AG04450 (cell line): ENCODE measurements at regions of chr6 and their contacts with region 1.

Region 1: GRCh38 chr6:33744001-33744848 is 2.5 kb downstream of the IP6K3 start:
- DNase-seq: no peak
- H3K4me3 ChIP-seq: no peak overlapping the region
- H3K27ac ChIP-seq: no peak overlapping the region
- H3K27me3 ChIP-seq: peaks cover 22% of the 10 kb centered on the region
- CTCF ChIP-seq: peak; percentile 96

Region 2: GRCh38 chr6:32271429-32271828 is 1472.8 kb before region 1 on chr6:
- CTCF ChIA-PET with region 1: no interaction called
- POLR2A ChIA-PET with region 1: no interaction called
- DNase-seq: no peak
- H3K4me3 ChIP-seq: no peak overlapping the region
- H3K27ac ChIP-seq: no peak overlapping the region
- H3K27me3 ChIP-seq: no peaks in the 10 kb centered on the region
- CTCF ChIP-seq: no peak

Region 3: DNA sequence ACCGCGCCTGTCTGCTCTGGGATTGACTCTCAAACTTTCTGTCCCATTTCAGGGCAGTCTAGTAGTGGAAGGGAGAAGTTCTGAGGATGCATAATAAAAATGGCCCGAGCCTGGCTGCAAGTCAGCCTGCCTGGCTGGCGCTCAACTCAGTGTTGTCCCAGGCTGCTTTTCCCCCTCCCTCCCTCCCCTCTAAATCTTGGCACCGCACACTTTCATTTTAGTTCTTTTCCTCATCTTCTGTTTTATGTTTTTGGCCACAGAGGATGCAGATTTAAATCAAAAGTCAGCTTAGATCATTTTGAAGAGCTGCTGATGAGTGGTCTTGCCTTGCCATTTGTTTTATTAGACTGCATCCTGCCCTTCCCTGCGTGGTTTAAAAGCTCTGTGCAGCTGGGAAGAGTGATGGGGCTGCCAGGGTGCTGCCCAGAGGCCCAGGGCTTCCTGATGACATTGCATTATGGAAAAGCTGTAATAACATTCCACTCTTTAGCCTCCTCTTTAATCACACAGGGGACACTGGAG is 26.2 kb before region 1 on chr6:
- CTCF ChIA-PET with region 1: interaction called, 11 read pairs
- POLR2A ChIA-PET with region 1: no interaction called
- DNase-seq: no peak
- H3K4me3 ChIP-seq: no peak overlapping the region
- H3K27ac ChIP-seq: no peak overlapping the region
- H3K27me3 ChIP-seq: peaks cover 31% of the 10 kb centered on the region
- CTCF ChIP-seq: no peak

Region 4: DNA sequence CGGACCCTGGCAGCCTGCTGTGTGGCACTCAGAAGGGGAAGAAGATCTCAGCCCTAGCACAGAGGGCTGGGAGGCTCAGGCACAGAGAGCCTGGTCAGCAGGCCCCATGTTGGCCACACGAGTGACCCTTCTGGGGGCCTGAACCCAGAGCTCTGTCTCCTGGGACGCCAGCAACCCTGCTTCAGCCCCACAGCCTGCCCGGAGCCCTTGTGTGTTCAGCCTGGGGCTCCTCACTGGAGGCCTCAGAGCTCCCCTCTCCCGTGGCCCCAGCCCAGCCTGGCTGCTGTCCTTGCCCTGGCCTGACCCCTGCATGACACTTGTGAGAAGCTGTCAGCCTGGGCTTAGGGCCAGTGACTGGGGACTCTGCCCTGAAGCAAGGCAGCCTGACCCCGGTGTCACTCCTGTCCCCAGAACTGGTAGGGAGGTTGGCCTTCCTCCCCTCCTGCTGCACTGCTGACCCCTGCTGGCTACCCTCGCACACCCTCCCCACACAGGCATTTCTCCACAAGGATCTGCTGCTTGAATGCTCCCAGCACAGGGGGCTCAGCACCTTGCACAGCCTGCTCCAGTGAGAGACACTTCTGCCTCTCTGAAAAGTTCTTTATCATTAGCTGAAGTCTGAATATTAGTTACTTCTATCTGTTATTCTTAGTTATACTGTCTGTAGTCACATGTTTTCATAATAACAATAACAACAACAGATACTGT is 17.9 kb after region 1 on chr6:
- CTCF ChIA-PET with region 1: interaction called, 62 read pairs
- POLR2A ChIA-PET with region 1: interaction called, 4 read pairs
- DNase-seq: no peak
- H3K4me3 ChIP-seq: no peak overlapping the region
- H3K27ac ChIP-seq: no peak overlapping the region
- H3K27me3 ChIP-seq: peaks cover 7% of the 10 kb centered on the region
- CTCF ChIP-seq: peak; percentile 60

Region 5: GRCh38 chr6:33781114-33781975 is 37.1 kb after region 1 on chr6:
- CTCF ChIA-PET with region 1: interaction called, 10 read pairs
- POLR2A ChIA-PET with region 1: no interaction called
- DNase-seq: no peak
- H3K4me3 ChIP-seq: no peak overlapping the region
- H3K27ac ChIP-seq: peak overlapping the region; percentile 31
- H3K27me3 ChIP-seq: no peaks in the 10 kb centered on the region
- CTCF ChIP-seq: no peak

Region 6: DNA sequence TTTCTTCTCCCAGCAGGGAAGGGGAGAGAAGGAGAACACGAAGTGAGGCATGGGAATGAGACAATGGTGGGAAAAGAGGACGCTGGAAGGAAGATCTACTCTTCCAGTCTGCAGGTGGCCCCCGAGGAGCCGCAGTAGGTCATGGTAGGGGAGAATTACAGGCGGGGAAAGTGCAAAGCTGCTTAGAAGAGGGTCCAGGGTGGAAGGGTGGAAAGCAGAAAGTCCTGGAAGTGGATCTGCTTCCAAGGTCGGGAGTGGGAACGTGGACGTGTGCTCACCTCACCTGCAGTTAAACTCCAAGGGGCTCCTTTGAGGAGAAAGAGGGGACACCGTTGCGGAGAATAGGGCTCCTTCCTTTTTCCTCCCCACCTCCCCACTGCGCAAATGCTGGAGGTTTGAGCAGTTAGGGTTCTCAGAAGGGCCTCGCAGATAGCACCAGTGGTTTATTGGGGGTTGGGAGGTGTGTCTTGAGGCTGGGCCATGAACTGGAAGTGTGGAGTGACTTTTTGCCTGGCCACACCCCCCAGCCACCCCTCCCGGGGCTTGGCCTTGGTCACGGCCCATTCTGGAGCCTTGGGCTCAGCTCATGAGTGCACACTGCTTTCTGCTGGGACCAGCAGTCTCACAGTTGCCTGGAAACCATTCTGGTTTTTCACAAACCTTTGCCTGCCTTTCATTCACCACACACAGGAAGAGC is 160.0 kb after region 1 on chr6:
- CTCF ChIA-PET with region 1: no interaction called
- POLR2A ChIA-PET with region 1: no interaction called
- DNase-seq: no peak
- H3K4me3 ChIP-seq: no peak overlapping the region
- H3K27ac ChIP-seq: no peak overlapping the region
- H3K27me3 ChIP-seq: peaks cover 63% of the 10 kb centered on the region
- CTCF ChIP-seq: no peak

Region 7: GRCh38 chr6:34027445-34027936 is 283.3 kb after region 1 on chr6:
- CTCF ChIA-PET with region 1: interaction called, 40 read pairs
- POLR2A ChIA-PET with region 1: no interaction called
- DNase-seq: no peak
- H3K4me3 ChIP-seq: no peak overlapping the region
- H3K27ac ChIP-seq: no peak overlapping the region
- H3K27me3 ChIP-seq: peaks cover 33% of the 10 kb centered on the region
- CTCF ChIP-seq: peak; percentile 75

Region 8: GRCh38 chr6:34154668-34155447 is 410.6 kb after region 1 on chr6:
- CTCF ChIA-PET with region 1: interaction called, 42 read pairs
- POLR2A ChIA-PET with region 1: no interaction called
- DNase-seq: no peak
- H3K4me3 ChIP-seq: peak overlapping the region; percentile 42
- H3K27ac ChIP-seq: no peak overlapping the region
- H3K27me3 ChIP-seq: peaks cover 49% of the 10 kb centered on the region
- CTCF ChIP-seq: peak; percentile 89